Naive thymus-derived CD4-positive, alpha-beta T cell (primary cell): ENCODE measurements at regions of chr7 and their contacts with region 1.

Region 1: GRCh38 chr7:44797329-44798251 is 1.1 kb downstream of the PPIA start:
- DNase-seq: peak; percentile 65 to 86 (median 80)
- ATAC-seq: peak; percentile 67
- H3K4me3 ChIP-seq: peak overlapping the region; percentile 87
- H3K4me3 Mint-ChIP-seq: peak overlapping the region; percentile 87 to 99 (median 98)
- H3K27ac ChIP-seq: peak overlapping the region; percentile 98
- H3K27ac Mint-ChIP-seq: peak overlapping the region; percentile 90 to 99 (median 97)
- H3K4me1 ChIP-seq: peaks cover 12 to 21% of the 10 kb centered on the region in 2 donors
- H3K4me1 Mint-ChIP-seq: peaks cover 8 to 41% (median 38%) of the 10 kb centered on the region in 7 donors
- H3K27me3 ChIP-seq: no peaks in the 10 kb centered on the region
- H3K27me3 Mint-ChIP-seq: no peaks in the 10 kb centered on the region

Region 2: DNA sequence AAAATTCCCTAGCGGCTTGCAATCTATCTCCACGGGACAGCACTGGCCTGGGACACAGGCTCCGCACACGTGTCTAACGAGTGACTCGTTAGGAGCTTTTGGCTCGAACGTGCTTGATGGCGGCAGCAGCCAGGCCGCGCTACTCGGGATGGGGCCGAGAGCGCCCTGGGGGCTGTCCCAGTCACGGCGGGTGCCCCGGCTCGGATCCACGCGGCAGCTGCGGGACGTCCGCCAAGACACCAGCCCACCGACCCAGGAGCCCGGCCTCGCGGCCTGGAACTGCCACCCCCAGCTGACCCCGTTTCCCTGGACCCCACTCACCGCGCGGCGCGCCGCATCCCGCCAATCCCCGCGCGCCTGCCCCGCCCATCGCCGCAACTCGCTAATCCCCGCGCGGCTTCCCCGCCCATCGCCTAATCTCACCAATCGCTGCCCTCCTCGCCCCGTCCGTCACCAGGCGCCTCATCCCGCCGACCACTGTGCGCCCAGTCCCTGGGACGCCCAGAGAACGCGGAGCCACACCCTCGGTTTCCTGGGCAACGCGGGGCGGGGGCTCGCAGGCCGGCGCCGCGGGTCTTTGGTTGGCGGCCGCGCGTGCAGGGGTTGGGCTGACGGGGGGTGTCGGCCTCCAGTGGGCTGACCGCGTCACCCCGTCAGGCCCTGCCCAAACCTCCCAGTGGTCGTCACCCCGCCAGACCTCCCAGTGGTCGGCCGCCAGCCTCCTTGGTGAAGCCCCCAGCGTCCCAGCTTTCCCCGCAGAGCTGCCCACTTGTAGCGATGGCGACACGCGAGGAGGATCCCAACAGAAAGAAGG is 674.2 kb before region 1 on chr7 and contains the start of gene POLD2:
- CTCF ChIA-PET with region 1: no interaction called
- POLR2A ChIA-PET with region 1: no interaction called
- intact Hi-C with region 1: loop called (anchors 1 kb)
- DNase-seq: peak; percentile 88 to 99 (median 94)
- ATAC-seq: peak; percentile 99
- H3K4me3 ChIP-seq: peak within 1 kb of the TSS; percentile 89
- H3K4me3 Mint-ChIP-seq: peak within 1 kb of the TSS; percentile 82 to 97 (median 93)
- H3K27ac ChIP-seq: peak within 1 kb of the TSS; percentile 74
- H3K27ac Mint-ChIP-seq: peak within 1 kb of the TSS; percentile 40 to 96 (median 87)
- H3K4me1 ChIP-seq: peaks cover 8 to 9% of the 10 kb centered on the region in 2 donors
- H3K4me1 Mint-ChIP-seq: peaks cover 18 to 40% (median 39%) of the 10 kb centered on the region in 7 donors
- H3K27me3 ChIP-seq: no peaks in the 10 kb centered on the region
- H3K27me3 Mint-ChIP-seq: peaks cover 0 to 23% (median 0%) of the 10 kb centered on the region in 5 donors
- total RNA-seq, gene POLD2: 55.1 to 118 (median 69.2) TPM

Region 3: GRCh38 chr7:44581879-44582603 is 215.5 kb before region 1 on chr7 and contains the start of gene TMED4:
- CTCF ChIA-PET with region 1: no interaction called
- POLR2A ChIA-PET with region 1: interaction called, 21 read pairs
- intact Hi-C with region 1: loop called (anchors 1 kb)
- DNase-seq: peak; percentile 100
- ATAC-seq: peak; percentile 96
- H3K4me3 ChIP-seq: peak within 1 kb of the TSS; percentile 95
- H3K4me3 Mint-ChIP-seq: peak within 1 kb of the TSS; percentile 86 to 97 (median 92)
- H3K27ac ChIP-seq: peak within 1 kb of the TSS; percentile 90
- H3K27ac Mint-ChIP-seq: peak within 1 kb of the TSS; percentile 95 to 99 (median 98)
- H3K4me1 ChIP-seq: peaks cover 14 to 19% of the 10 kb centered on the region in 2 donors
- H3K4me1 Mint-ChIP-seq: peaks cover 13 to 43% (median 38%) of the 10 kb centered on the region in 7 donors
- H3K27me3 ChIP-seq: no peaks in the 10 kb centered on the region
- H3K27me3 Mint-ChIP-seq: peaks cover 0 to 12% (median 0%) of the 10 kb centered on the region in 5 donors
- total RNA-seq, gene TMED4: 70.0 to 98.5 (median 95.3) TPM

Region 4: GRCh38 chr7:44706788-44707560 is 90.6 kb before region 1 on chr7:
- CTCF ChIA-PET with region 1: interaction called, 4 read pairs
- POLR2A ChIA-PET with region 1: no interaction called
- intact Hi-C with region 1: loop called in 1 of 2 experiments (anchors 2 kb)
- DNase-seq: no peak
- ATAC-seq: no peak
- H3K4me3 ChIP-seq: no peak overlapping the region
- H3K4me3 Mint-ChIP-seq: no peak overlapping the region
- H3K27ac ChIP-seq: no peak overlapping the region
- H3K27ac Mint-ChIP-seq: no peak overlapping the region
- H3K4me1 ChIP-seq: peaks cover 0 to 2% of the 10 kb centered on the region in 2 donors
- H3K4me1 Mint-ChIP-seq: peaks cover 2 to 5% (median 3%) of the 10 kb centered on the region in 7 donors
- H3K27me3 ChIP-seq: no peaks in the 10 kb centered on the region
- H3K27me3 Mint-ChIP-seq: no peaks in the 10 kb centered on the region

Region 5: DNA sequence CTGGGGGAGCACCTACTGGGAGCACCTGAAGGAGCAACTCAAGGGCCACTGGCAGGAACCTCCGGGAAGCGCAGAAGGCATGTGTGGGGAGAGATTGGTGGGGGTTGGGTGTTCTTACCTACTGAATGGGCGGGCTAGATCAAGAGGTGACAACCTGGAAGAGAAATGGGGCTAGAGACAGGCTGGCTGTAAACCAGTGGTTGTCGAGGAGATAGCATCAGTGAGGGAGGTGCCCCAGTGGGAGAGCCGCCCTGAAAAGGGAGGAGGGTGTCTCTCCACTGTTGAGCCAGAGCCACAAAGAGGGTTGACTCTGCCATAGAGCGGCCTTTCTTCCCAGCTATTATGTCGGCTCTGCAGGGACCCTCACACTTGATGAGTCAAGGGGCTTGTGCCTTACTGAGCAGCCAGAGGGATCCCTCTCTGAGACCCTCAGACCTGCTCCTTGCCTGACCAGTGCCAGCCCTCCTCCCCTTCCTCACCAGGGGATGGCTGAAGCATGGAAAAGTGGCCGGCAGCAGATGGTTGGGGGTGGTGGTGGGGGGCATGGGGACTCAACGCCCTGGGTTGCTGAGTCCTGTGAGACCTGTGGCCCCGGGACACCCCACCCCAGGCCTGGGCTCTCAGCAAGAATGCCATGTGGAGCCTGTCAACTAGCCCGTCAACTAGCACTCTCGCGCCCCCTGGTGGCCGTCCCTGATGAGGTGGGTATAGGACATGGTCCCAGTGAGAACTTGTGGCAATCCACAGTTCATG is 124.2 kb after region 1 on chr7:
- CTCF ChIA-PET with region 1: no interaction called
- POLR2A ChIA-PET with region 1: no interaction called
- intact Hi-C with region 1: loop called in 1 of 2 experiments (anchors 5 kb)
- DNase-seq: peak; percentile 76 to 98 (median 86)
- ATAC-seq: peak; percentile 99
- H3K4me3 ChIP-seq: no peak overlapping the region
- H3K4me3 Mint-ChIP-seq: no peak overlapping the region
- H3K27ac ChIP-seq: no peak overlapping the region
- H3K27ac Mint-ChIP-seq: peak overlapping the region in 5 of 9 donors; percentile 6 to 78 (median 34)
- H3K4me1 ChIP-seq: peaks cover 0 to 9% of the 10 kb centered on the region in 2 donors
- H3K4me1 Mint-ChIP-seq: peaks cover 0 to 21% (median 0%) of the 10 kb centered on the region in 7 donors
- H3K27me3 ChIP-seq: no peaks in the 10 kb centered on the region
- H3K27me3 Mint-ChIP-seq: peaks cover 0 to 6% (median 0%) of the 10 kb centered on the region in 5 donors

Region 6: DNA sequence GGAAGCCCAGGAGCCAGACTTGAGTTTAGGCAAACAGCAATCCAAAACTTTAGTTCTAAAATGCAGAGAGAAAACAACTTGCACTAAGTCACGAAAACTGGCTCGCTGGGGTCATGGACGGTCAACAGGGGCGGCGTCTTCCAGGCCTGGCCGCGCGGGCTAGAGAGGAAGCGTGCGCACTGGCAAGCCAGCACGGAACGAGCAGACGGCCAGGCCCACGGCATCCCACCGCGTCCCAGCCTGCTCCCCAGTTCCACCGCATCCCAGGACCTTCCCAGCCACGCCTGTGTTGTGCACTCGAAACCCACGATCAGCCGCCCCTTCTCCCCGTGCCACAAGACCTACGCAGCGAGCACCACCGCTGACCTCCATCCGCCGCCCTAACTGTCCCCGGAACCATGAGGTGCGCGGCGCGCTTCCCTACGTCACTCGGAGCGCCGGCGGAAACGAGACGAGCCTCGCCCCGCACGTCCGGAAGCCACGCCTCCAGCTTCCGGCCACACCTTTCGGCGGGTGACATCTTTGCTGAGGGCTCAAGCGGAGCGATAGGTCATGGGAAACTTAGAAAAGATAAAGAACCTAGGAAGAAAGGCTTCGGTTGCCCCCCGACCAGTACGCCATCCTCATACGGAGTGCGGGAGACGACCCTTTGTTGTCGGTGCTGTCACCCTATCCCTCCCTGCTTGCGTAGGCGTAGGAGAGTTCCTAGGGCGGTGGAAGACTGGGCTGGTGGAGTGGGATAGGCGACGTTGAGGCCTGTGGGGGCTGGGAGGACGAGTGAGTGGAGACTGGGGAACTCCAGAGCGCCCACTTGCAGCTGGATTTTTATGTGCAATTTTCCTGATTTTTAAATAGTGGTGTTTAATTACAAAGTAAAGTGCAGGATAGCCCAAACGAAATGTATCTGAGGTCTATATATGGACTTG is 314.0 kb after region 1 on chr7 and contains the start of gene TBRG4:
- CTCF ChIA-PET with region 1: no interaction called
- POLR2A ChIA-PET with region 1: interaction called, 4 read pairs
- intact Hi-C with region 1: loop called (anchors 1 to 2 kb)
- DNase-seq: peak; percentile 88 to 96 (median 94)
- ATAC-seq: peak; percentile 94
- H3K4me3 ChIP-seq: peak within 1 kb of the TSS; percentile 80
- H3K4me3 Mint-ChIP-seq: peak within 1 kb of the TSS; percentile 93 to 100 (median 96)
- H3K27ac ChIP-seq: peak within 1 kb of the TSS; percentile 98
- H3K27ac Mint-ChIP-seq: peak within 1 kb of the TSS; percentile 98 to 100 (median 99)
- H3K4me1 ChIP-seq: peaks cover 17 to 45% of the 10 kb centered on the region in 2 donors
- H3K4me1 Mint-ChIP-seq: peaks cover 30 to 59% (median 50%) of the 10 kb centered on the region in 7 donors
- H3K27me3 ChIP-seq: no peaks in the 10 kb centered on the region
- H3K27me3 Mint-ChIP-seq: peaks cover 0 to 31% (median 0%) of the 10 kb centered on the region in 5 donors
- total RNA-seq, gene TBRG4: 93.7 to 143 (median 107) TPM